Testis (tissue), 5 donors: ENCODE measurements at regions of chr19 and their contacts with region 1.

Region 1: DNA sequence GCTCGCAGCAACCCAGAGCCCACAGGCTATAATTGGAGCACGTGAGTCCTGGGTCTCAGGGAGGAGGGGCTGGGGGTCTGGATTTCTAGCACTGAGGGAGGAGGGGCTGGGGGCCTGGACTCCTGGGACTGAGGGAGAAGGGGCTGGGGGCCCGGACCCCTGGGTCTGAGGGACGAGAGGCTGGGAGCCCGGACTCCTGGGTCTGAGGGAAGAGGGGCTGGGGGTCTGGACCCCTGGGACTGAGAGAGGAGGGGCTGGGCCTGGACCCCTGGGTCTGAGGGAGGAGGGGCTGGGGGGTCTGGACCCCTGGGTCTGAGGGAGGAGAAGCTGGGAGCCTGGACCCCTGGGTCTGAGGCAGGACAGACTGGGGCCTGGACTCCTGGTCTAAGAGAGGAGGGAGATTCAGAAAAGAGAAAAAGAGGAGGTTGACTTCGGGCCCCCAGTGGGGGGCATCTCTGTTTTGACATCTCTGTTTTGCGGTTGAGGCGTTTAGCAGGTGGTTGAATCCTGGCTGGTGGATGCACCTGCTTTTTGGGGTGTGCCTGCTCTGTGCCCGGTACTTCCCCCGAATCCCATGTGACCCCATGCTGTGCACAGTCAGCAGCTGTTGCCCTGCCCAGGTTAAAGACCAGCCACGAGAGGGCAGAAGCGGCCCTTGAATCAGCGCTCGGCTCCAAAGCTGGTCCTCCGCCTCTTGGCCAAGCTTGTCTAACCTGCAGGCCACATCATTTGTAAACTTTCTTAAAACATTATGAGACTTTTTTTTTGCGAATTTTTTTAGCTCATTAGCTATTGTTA is 10.5 kb downstream of the PVR start:
- DNase-seq: peak; percentile 80
- H3K4me3 ChIP-seq: no peak overlapping the region
- H3K27ac ChIP-seq: no peak overlapping the region
- H3K4me1 ChIP-seq: no peaks in the 10 kb centered on the region
- H3K27me3 ChIP-seq: no peaks in the 10 kb centered on the region
- CTCF ChIP-seq: peak; percentile 15 to 44 (median 35)
- POLR2A ChIP-seq: no peak

Region 2: GRCh38 chr19:44570984-44571684 is 83.0 kb before region 1 on chr19:
- intact Hi-C with region 1: loop called (anchors 10 kb)
- DNase-seq: peak; percentile 87
- H3K4me3 ChIP-seq: no peak overlapping the region
- H3K27ac ChIP-seq: no peak overlapping the region
- H3K4me1 ChIP-seq: no peaks in the 10 kb centered on the region
- H3K27me3 ChIP-seq: no peaks in the 10 kb centered on the region
- CTCF ChIP-seq: peak; percentile 49 to 84 (median 61)
- POLR2A ChIP-seq: no peak

Region 3: DNA sequence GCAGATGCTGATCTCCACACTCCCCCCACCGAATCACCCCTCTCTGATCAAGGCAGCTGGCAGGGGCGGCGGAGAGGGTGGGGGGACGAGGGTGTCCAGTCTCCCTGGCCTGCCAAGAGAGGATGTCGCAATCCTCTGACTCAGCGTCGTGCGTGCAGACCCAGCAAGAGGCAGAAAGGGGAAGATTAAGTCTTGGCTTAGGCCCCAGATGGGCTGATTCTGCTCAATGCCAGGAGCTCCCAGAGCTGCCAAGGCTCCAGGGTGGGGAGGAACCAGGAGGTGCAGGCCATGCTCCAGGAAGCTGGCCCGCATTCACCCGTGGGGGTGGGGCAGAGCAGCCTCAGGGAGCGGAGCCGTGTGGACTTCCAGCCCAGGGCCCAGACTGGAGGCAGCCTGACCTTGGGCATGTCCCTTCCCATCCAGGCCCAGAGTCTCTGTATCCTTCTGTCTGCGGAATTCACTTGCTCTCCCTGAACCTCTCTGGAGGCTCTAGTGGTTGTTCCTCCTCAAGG is 87.7 kb after region 1 on chr19:
- intact Hi-C with region 1: no loop called
- DNase-seq: peak; percentile 97
- H3K4me3 ChIP-seq: no peak overlapping the region
- H3K27ac ChIP-seq: peak overlapping the region; percentile 77 to 86
- H3K4me1 ChIP-seq: peaks cover 49% of the 10 kb centered on the region
- H3K27me3 ChIP-seq: no peaks in the 10 kb centered on the region
- CTCF ChIP-seq: no peak
- POLR2A ChIP-seq: no peak

Region 4: GRCh38 chr19:44752816-44753618 is 98.8 kb after region 1 on chr19:
- intact Hi-C with region 1: no loop called
- DNase-seq: peak; percentile 92
- H3K4me3 ChIP-seq: peak overlapping the region in 1 of 2 donors; percentile 51
- H3K27ac ChIP-seq: peak overlapping the region; percentile 83 to 86
- H3K4me1 ChIP-seq: peaks cover 59% of the 10 kb centered on the region
- H3K27me3 ChIP-seq: no peaks in the 10 kb centered on the region
- CTCF ChIP-seq: no peak
- POLR2A ChIP-seq: no peak